K562 (cell line): ENCODE measurements at regions of chr12 and their contacts with region 1.

Region 1: GRCh38 chr12:76113800-76114757 is 29.6 kb upstream of the NAP1L1 start:
- DNase-seq: peak; percentile 62 to 93 (median 74)
- ATAC-seq: peak; percentile 78
- H3K4me3 ChIP-seq: 0 out of 2 replicates have a peak overlapping the region, but pooled peaks have one; percentile 9
- H3K27ac ChIP-seq: peak overlapping the region; percentile 89
- H3K4me1 ChIP-seq: peaks cover 14 to 33% of the 10 kb centered on the region in 2 experiments; a peak in 4 of 5 replicates
- H3K27me3 ChIP-seq: no peaks in the 10 kb centered on the region
- CTCF ChIP-seq: no peak
- EP300 ChIP-seq: peak; percentile 95
- POLR2A ChIP-seq: peak; percentile 52; the same call in 1 of the 2 replicates
- RAD21 ChIP-seq: no peak

Region 2: GRCh38 chr12:76083904-76084862 is 29.9 kb before region 1 on chr12 and contains the start of gene NAP1L1:
- CTCF ChIA-PET with region 1: no interaction called
- POLR2A ChIA-PET with region 1: no interaction called
- in situ Hi-C with region 1: no loop called
- intact Hi-C with region 1: loop called (anchors 2 kb)
- DNase-seq: peak; percentile 90 to 98 (median 93)
- ATAC-seq: peak; percentile 91
- H3K4me3 ChIP-seq: peak within 1 kb of the TSS; percentile 91
- H3K27ac ChIP-seq: peak within 1 kb of the TSS; percentile 93
- H3K4me1 ChIP-seq: peaks cover 16 to 38% of the 10 kb centered on the region in 2 experiments
- H3K27me3 ChIP-seq: no peaks in the 10 kb centered on the region
- CTCF ChIP-seq: peak in 2 of 3 experiments; percentile 9 to 23; a peak in 1 of 6 replicates
- EP300 ChIP-seq: 0 out of 2 replicates have a peak, but pooled peaks have one; percentile 4
- POLR2A ChIP-seq: peak; percentile 93
- RAD21 ChIP-seq: no peak; a peak in 1 of 4 replicates
- polyA plus RNA-seq, gene NAP1L1: 287 to 326 TPM